ENCODE measurements at regions of chr12 and their contacts with region 1.

Region 1: GRCh38 chr12:57522011-57522886 is at the start of gene MBD6:
- DNase-seq: peak; percentile 91
- H3K4me3 Mint-ChIP-seq: peak within 1 kb of the TSS; percentile 98
- H3K27ac Mint-ChIP-seq: peak within 1 kb of the TSS; percentile 100
- H3K4me1 Mint-ChIP-seq: peaks cover 61% of the 10 kb centered on the region
- H3K27me3 Mint-ChIP-seq: no peaks in the 10 kb centered on the region
- total RNA-seq, gene MBD6: 66.0 to 80.1 TPM

Region 2: GRCh38 chr12:57541001-57541400 is 18.8 kb after region 1 on chr12:
- CTCF ChIA-PET with region 1: interaction called, 70 read pairs
- POLR2A ChIA-PET with region 1: interaction called, 3 read pairs
- DNase-seq: no peak
- H3K4me3 Mint-ChIP-seq: no peak overlapping the region
- H3K27ac Mint-ChIP-seq: no peak overlapping the region
- H3K4me1 Mint-ChIP-seq: peaks cover 28% of the 10 kb centered on the region
- H3K27me3 Mint-ChIP-seq: no peaks in the 10 kb centered on the region